Activated CD4-positive, alpha-beta memory T cell treated with anti-CD3 and anti-CD28 coated beads for 36 hours (primary cell): ENCODE measurements at regions of chr12 and their contacts with region 1.

Region 1: DNA sequence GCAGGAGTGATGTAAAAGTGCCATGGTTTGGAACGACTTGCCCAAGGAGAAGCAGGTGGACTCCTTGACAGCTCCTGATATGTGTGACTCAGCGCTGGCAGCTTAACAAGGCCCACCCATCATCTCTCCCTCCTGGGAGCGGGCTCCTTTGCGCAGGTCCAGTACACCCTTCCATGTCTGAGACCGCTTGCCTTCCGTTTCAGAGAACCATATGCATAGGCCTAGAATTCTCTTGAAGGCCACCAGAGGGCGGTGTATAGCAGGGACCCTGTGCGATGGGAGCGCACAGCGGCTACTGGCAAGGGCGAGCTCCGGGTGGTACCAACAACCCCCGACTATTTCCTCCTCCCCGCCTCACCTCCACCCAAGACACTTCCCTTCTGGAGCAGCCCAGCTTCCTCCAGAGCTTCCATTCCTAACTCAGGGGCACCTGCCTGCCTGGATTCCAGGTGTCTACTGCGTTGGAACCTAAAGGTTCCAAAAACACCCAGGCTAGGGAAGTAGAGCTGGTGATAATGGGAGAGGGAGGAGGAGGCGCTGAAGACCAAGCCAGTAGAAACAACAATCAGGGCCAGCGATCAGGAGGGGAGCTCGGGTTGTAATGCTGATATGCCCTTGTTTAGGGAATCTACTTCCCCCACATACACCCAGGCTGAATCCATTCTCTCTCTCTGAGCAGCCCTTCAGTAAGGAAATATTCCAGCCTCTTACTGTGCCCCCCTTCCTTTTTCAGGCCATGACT is 6.2 kb downstream of the DHH start:
- DNase-seq: peak; percentile 78
- H3K4me3 Mint-ChIP-seq: peak overlapping the region; percentile 16
- H3K27ac Mint-ChIP-seq: peak overlapping the region; percentile 23
- H3K4me1 Mint-ChIP-seq: peaks cover 43% of the 10 kb centered on the region
- H3K27me3 Mint-ChIP-seq: peaks cover 46% of the 10 kb centered on the region

Region 2: DNA sequence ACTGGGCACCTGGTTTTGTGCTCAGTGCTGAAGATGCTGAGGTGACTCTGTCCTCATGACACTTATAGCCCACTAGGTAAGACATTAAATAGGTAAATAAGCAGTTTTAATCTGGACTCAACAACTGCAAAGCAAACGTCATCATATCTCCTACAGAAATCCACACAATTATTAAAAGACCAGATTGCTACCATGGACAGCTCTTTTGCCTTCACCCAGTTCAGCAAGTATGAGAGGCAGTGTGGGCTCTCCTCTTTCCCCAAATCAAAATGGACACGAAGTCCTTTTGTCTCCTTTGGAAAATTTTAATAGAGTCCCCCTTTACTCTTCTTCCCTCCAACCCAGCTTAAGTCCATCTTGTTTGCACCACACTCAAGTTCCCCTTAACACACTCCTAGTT is 1553.7 kb before region 1 on chr12:
- CTCF ChIA-PET with region 1: no interaction called
- POLR2A ChIA-PET with region 1: no interaction called
- intact Hi-C with region 1: no loop called
- DNase-seq: no peak
- H3K4me3 Mint-ChIP-seq: no peak overlapping the region
- H3K27ac Mint-ChIP-seq: no peak overlapping the region
- H3K4me1 Mint-ChIP-seq: no peaks in the 10 kb centered on the region
- H3K27me3 Mint-ChIP-seq: peaks cover 24% of the 10 kb centered on the region

Region 3: GRCh38 chr12:48988030-48988649 is 100.2 kb before region 1 on chr12:
- CTCF ChIA-PET with region 1: interaction called, 12 read pairs
- POLR2A ChIA-PET with region 1: no interaction called
- intact Hi-C with region 1: loop called (anchors 5 kb)
- DNase-seq: peak; percentile 86
- H3K4me3 Mint-ChIP-seq: no peak overlapping the region
- H3K27ac Mint-ChIP-seq: no peak overlapping the region
- H3K4me1 Mint-ChIP-seq: peaks cover 5% of the 10 kb centered on the region
- H3K27me3 Mint-ChIP-seq: peaks cover 24% of the 10 kb centered on the region

Region 4: DNA sequence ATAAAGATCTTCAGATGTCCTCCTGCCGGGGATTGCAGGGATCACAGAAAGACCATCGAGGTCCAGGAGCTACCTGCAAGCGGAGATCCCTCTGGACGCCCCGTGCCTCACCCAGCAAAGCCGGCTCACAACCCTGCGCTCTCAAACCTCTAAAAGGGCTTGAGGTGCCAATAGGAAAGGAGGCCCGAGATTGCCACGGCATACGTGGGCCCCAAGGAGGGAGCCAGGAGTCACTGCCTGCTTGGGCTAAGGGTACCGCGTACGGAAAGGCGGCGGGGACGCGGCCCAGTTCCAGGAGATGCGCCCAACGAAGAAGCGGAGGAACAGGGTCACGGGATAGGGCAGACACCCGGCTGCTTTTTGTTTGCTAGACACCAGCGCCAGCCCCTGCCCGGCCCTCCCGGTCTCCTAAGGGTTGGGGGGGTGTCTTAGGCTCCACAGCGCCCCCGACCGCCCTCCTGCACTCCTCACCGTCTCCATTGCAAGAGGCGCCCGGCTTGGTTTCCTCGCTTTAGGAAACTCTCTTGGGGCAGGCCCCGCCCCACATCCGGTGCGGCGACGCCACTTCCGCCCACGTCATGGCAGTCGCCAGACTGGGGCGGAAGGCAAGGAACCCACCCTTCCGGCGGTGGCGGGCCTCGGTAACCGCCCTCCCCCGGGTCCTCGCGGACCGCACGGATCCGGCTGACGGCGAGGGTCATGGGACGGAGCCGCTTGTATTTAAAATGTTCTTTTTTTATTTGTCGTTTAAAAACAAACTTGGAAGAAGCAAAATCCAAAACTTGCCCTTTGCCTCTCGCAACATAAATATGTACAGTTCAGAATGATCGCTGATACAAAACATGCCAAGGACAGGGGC is 69.9 kb before region 1 on chr12 and contains the start of gene PRKAG1:
- CTCF ChIA-PET with region 1: interaction called, 12 read pairs
- POLR2A ChIA-PET with region 1: no interaction called
- intact Hi-C with region 1: no loop called
- DNase-seq: peak; percentile 97
- H3K4me3 Mint-ChIP-seq: peak within 1 kb of the TSS; percentile 95
- H3K27ac Mint-ChIP-seq: peak within 1 kb of the TSS; percentile 92
- H3K4me1 Mint-ChIP-seq: peaks cover 40% of the 10 kb centered on the region
- H3K27me3 Mint-ChIP-seq: no peaks in the 10 kb centered on the region
- total RNA-seq, gene PRKAG1: 52.0 to 55.8 TPM

Region 5: DNA sequence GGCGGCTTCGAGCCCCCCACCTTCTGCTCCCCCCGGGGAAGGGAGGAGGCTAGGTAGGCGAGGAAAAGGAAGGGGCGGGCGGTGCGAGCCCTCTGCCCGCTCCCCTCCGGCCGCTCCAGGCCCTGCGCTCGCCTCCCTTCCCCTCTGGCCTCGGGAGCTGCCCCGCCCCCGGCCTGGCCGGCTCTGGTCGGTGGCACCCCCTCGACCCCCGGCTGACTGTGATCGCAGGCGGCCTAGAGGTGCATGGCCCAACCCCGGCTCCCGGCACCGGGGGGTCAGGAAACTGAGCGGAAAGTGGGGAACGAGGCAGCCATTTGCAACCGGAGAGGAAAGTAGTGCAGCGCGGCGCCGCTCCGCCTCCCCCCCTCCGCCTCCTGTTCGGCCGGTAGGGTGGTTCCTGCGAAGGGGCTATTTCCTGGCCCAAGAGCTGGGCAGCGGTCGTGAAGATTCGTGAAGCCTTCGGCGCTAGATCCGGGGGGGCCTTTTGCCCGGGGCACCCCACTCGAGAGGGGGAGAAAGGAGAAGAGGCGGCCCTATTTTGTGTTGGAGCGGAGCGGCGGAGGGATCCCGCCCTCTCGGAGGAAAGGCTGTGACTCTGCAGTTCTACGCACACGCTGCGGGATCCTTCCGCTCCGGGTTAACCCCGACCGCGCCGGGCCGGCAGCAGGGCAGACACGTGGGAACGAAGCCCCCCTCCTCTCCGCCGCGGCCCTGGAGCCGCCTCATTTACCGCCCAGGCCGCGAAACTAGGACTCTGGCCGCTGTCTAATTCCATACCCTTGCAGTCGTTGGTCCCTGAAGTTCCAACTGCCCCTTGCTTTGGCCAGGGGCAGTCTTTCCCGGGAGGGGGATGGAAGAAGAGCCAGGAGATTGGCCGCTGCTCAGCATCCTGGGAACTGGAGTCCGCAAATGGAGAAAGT is 27.9 kb before region 1 on chr12 and contains the start of gene KMT2D:
- CTCF ChIA-PET with region 1: interaction called, 256 read pairs
- POLR2A ChIA-PET with region 1: interaction called, 7 read pairs
- intact Hi-C with region 1: loop called (anchors 1 kb)
- DNase-seq: peak; percentile 91
- H3K4me3 Mint-ChIP-seq: peak within 1 kb of the TSS; percentile 94
- H3K27ac Mint-ChIP-seq: peak within 1 kb of the TSS; percentile 96
- H3K4me1 Mint-ChIP-seq: peaks cover 43% of the 10 kb centered on the region
- H3K27me3 Mint-ChIP-seq: no peaks in the 10 kb centered on the region
- total RNA-seq, gene KMT2D: 47.9 to 49.0 TPM

Region 6: GRCh38 chr12:49105608-49106007 is 17.2 kb after region 1 on chr12:
- CTCF ChIA-PET with region 1: interaction called, 184 read pairs
- POLR2A ChIA-PET with region 1: interaction called, 3 read pairs
- intact Hi-C with region 1: loop called (anchors 1 kb)
- DNase-seq: no peak
- H3K4me3 Mint-ChIP-seq: no peak overlapping the region
- H3K27ac Mint-ChIP-seq: no peak overlapping the region
- H3K4me1 Mint-ChIP-seq: peaks cover 20% of the 10 kb centered on the region
- H3K27me3 Mint-ChIP-seq: no peaks in the 10 kb centered on the region

Region 7: GRCh38 chr12:49121047-49121696 is 32.8 kb after region 1 on chr12:
- CTCF ChIA-PET with region 1: interaction called, 11 read pairs
- POLR2A ChIA-PET with region 1: no interaction called
- intact Hi-C with region 1: loop called (anchors 5 kb)
- DNase-seq: no peak
- H3K4me3 Mint-ChIP-seq: no peak overlapping the region
- H3K27ac Mint-ChIP-seq: no peak overlapping the region
- H3K4me1 Mint-ChIP-seq: no peaks in the 10 kb centered on the region
- H3K27me3 Mint-ChIP-seq: no peaks in the 10 kb centered on the region

Region 8: GRCh38 chr12:49232940-49233841 is 144.8 kb after region 1 on chr12:
- CTCF ChIA-PET with region 1: interaction called, 22 read pairs
- POLR2A ChIA-PET with region 1: interaction called, 5 read pairs
- intact Hi-C with region 1: loop called (anchors 1 kb)
- DNase-seq: no peak
- H3K4me3 Mint-ChIP-seq: no peak overlapping the region
- H3K27ac Mint-ChIP-seq: no peak overlapping the region
- H3K4me1 Mint-ChIP-seq: peaks cover 16% of the 10 kb centered on the region
- H3K27me3 Mint-ChIP-seq: no peaks in the 10 kb centered on the region

Region 9: DNA sequence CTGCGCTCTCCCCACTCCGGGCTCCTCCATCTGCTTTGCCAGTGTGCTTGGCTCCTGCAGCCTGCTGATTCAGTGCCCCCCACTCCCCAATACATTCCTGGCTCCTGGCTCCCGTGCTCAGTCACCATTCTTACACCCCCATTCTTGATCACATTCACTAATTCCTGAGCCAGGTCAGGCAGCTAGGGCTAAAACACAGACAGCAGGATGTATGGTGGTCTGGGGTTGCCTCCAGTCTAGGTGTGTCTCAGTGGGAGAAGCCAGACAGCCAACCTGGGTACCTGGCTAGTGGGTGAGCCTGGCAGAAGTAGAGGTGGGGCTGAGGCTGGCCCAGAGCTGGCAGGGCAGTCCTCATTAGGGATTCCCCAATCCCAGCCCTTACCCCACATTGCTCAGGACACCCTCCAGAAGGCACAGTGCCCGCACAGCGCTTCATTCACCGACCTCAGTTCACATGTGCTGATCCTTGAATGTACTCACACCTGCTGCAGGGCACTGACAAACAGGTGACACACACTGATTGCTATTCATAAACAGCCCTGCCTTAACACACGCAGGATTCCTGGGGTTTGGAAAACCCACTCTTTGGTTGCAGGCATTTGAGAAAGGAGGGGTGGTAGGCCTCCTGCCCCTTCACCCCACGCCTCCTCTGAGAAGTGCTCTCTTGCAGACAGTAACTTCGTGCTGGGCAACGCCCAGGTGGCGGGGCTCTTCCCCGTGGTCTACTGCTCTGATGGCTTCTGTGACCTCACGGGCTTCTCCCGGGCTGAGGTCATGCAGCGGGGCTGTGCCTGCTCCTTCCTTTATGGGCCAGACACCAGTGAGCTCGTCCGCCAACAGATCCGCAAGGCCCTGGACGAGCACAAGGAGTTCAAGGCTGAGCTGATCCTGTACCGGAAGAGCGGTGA is 452.1 kb after region 1 on chr12:
- CTCF ChIA-PET with region 1: no interaction called
- POLR2A ChIA-PET with region 1: no interaction called
- intact Hi-C with region 1: no loop called
- DNase-seq: no peak
- H3K4me3 Mint-ChIP-seq: no peak overlapping the region
- H3K27ac Mint-ChIP-seq: no peak overlapping the region
- H3K4me1 Mint-ChIP-seq: peaks cover 6% of the 10 kb centered on the region
- H3K27me3 Mint-ChIP-seq: peaks cover 15% of the 10 kb centered on the region